Right ventricle myocardium inferior (tissue), 1 donor: ENCODE measurements at regions of chr2 and their contacts with region 1.

Region 1: DNA sequence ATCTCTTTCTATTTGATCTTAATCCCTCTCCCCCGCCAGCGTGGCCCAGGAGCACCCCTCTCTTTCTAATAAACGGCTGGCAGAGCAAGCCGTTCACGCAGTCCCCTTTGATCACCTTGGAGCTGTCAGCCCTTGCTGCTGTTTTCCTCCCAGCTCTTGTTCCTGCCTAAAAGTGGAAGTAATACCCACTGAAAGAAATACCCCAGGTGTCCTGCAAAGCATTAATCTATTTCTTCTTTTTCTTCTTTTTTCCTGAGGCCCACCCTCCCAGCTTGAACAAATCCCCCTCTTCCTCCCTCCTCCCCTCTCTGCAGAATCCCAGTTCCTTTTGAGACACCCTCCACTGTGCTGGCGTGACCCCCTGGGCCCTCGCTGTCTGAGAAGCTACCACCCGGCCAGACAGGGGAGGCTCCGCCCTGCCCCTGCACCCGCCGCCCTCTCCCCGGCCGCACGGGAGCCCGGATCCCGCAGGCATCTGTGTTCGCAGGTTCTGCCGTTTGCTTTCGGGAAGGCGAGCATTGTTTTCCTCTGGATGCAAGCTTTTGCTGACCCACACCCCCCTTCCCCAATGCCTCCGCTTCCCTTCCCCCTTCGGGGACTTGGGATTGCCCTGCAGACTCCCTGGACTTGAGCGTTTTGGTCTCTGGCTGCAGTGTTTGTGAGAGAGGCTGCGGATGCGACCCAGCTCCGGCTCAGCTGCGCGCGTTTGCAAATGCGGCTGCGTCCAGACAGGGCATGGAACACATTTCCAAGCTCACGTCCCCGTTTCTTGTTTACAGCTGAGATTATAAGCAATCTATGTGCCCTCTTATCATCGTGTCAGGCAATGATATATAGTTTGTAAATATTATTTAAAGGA is 631.5 kb downstream of the NYAP2 start:
- DNase-seq: peak; percentile 88
- ATAC-seq: peak; percentile 95

Region 2: GRCh38 chr2:226185616-226186211 is 154.7 kb after region 1 on chr2:
- intact Hi-C with region 1: loop called (anchors 5 kb)
- DNase-seq: no peak
- ATAC-seq: no peak